ENCODE measurements at regions of chr12 and their contacts with region 1.

Region 1: GRCh38 chr12:113846883-113847755 is 119.0 kb downstream of the RBM19 start:
- DNase-seq: no peak
- H3K4me3 ChIP-seq: no peak overlapping the region
- H3K27ac ChIP-seq: no peak overlapping the region
- H3K4me1 ChIP-seq: no peaks in the 10 kb centered on the region
- H3K27me3 ChIP-seq: no peaks in the 10 kb centered on the region
- CTCF ChIP-seq: no peak

Region 2: DNA sequence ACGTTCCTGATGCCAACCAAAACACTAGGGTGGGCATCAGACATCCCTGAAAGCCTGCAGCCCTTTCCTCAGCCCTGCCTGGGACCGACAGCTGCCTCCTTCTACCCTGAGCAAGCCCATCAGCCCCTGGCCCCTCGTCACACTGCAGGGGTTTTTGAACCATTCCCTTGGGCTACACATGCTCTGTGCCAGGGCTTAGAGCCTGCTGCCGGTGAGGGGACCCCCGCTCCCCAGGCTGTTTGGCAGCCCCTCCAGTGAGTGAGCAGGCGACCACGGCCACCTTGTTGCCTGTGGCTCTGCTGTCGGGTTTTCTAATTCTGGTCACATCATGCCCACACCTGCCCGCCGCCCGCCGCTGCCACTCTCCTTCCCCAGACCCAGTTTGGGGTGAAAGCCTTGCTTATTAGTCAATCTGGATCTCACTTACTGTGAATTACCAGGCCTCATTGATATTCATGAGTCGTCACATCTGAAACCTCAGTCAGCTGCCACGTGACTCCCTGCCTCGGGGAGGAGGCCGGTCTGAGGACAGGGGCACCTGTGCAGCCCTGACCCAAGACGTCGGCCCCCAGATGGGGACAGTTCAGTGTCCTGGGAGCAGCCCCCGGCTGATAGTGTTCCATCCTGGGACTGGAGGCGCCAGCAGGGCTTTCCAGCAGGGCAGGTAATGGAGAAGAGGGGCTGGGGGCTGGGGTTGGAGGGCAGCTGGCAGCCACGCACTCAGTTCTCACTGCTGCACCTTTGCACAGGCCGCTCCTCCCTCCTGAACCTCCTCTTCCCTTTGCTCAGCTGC is 44.0 kb before region 1 on chr12:
- CTCF ChIA-PET with region 1: no interaction called
- dilution Hi-C with region 1: no loop called
- in situ Hi-C with region 1: no loop called
- intact Hi-C with region 1: no loop called
- DNase-seq: no peak
- H3K4me3 ChIP-seq: no peak overlapping the region
- H3K27ac ChIP-seq: no peak overlapping the region
- H3K4me1 ChIP-seq: no peaks in the 10 kb centered on the region
- H3K27me3 ChIP-seq: no peaks in the 10 kb centered on the region
- CTCF ChIP-seq: no peak

Region 3: GRCh38 chr12:113860059-113860820 is 13.1 kb after region 1 on chr12:
- CTCF ChIA-PET with region 1: interaction called, 18 read pairs
- dilution Hi-C with region 1: no loop called
- in situ Hi-C with region 1: no loop called
- intact Hi-C with region 1: no loop called
- DNase-seq: no peak
- H3K4me3 ChIP-seq: no peak overlapping the region
- H3K27ac ChIP-seq: no peak overlapping the region
- H3K4me1 ChIP-seq: peaks cover 21% of the 10 kb centered on the region
- H3K27me3 ChIP-seq: no peaks in the 10 kb centered on the region
- CTCF ChIP-seq: peak in 1 of 2 donors; percentile 2

Region 4: GRCh38 chr12:113933201-113933786 is 86.2 kb after region 1 on chr12:
- CTCF ChIA-PET with region 1: no interaction called
- dilution Hi-C with region 1: no loop called
- in situ Hi-C with region 1: no loop called
- intact Hi-C with region 1: no loop called
- DNase-seq: no peak
- H3K4me3 ChIP-seq: no peak overlapping the region
- H3K27ac ChIP-seq: no peak overlapping the region
- H3K4me1 ChIP-seq: no peaks in the 10 kb centered on the region
- H3K27me3 ChIP-seq: no peaks in the 10 kb centered on the region
- CTCF ChIP-seq: no peak